Mucosa of descending colon (tissue), 3 donors: ENCODE measurements at regions of chr10 and their contacts with region 1.

Region 1: GRCh38 chr10:88944813-88945212 is 7.8 kb downstream of the ACTA2 start:
- DNase-seq: no peak
- ATAC-seq: no peak
- H3K4me3 ChIP-seq: no peak overlapping the region
- H3K4me1 ChIP-seq: no peaks in the 10 kb centered on the region
- CTCF ChIP-seq: no peak

Region 2: GRCh38 chr10:88707429-88708285 is 237.2 kb before region 1 on chr10:
- intact Hi-C with region 1: no loop called
- DNase-seq: no peak
- ATAC-seq: no peak
- H3K4me3 ChIP-seq: no peak overlapping the region
- H3K4me1 ChIP-seq: peaks cover 3% of the 10 kb centered on the region
- CTCF ChIP-seq: no peak

Region 3: DNA sequence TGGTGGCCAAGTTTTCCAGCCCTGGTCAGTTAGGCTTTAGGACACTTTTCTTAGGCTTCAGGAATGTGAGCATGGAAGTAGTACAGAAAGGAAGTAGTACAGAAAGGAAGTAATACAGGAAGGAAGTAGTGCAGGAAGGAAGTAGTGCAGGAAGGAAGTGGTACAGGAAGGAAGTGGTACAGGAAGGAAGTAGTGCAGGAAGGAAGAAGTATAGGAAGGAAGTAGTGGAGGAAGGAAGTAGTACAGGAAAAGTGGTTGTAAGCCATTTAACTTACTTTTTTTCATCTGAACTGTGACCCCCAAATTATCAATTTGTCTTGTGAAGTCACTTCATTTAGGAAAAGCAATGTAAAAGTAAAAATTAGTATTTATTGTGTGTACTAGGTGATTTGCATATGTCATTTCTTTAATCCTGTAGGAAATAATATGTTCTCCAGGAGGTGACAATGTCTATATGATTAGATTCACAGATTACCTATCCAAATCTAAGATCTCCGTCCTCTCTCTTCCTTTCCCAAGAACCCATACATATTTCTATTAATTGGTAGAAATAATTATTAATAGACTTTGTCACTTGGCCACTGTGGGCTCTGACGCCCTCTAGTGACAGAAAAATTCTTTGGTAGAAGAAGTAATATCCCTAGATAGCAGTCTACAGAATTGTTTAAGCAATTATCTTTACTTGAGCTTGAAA is 41.9 kb after region 1 on chr10:
- intact Hi-C with region 1: loop called in 1 of 2 experiments (anchors 5 kb)
- DNase-seq: peak in 1 of 3 donors; percentile 60
- ATAC-seq: no peak
- H3K4me3 ChIP-seq: no peak overlapping the region
- H3K4me1 ChIP-seq: peaks cover 18% of the 10 kb centered on the region
- CTCF ChIP-seq: no peak